Esophagus squamous epithelium (tissue), 5 donors: ENCODE measurements at regions of chr7 and their contacts with region 1.

Region 1: DNA sequence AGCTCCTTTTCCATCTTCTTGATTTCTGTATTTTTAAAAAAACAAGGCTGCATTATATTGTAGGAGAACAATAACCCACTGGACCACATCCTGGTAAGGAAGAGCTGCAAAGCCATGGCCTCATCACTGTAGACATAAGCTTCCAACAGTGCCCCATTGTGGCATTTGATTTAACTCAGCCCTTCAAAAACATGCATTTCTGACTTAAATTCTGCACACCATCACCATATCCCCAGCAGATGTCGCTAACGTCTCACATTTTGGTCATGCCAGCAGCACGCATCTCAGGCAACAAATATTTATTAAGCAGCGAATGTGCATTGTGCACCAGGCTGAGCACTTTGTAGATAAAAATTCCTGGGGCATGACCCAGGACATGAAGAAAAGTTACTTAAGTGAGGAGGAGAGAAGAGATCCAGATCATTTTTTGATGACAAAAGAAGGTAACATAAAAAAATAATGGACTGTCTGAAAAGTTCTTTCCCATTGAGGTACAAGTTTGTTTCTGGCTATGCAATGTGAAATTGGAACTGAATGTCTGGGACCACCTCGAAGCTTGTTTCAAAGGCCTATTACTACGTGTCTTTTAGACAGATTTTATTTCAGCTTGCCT is 164.6 kb upstream of the CDCA7L start:
- DNase-seq: no peak
- H3K4me3 ChIP-seq: no peak overlapping the region
- H3K27ac ChIP-seq: no peak overlapping the region
- H3K4me1 ChIP-seq: no peaks in the 10 kb centered on the region
- H3K27me3 ChIP-seq: no peaks in the 10 kb centered on the region
- CTCF ChIP-seq: peak; percentile 62 to 89 (median 83)
- POLR2A ChIP-seq: no peak

Region 2: DNA sequence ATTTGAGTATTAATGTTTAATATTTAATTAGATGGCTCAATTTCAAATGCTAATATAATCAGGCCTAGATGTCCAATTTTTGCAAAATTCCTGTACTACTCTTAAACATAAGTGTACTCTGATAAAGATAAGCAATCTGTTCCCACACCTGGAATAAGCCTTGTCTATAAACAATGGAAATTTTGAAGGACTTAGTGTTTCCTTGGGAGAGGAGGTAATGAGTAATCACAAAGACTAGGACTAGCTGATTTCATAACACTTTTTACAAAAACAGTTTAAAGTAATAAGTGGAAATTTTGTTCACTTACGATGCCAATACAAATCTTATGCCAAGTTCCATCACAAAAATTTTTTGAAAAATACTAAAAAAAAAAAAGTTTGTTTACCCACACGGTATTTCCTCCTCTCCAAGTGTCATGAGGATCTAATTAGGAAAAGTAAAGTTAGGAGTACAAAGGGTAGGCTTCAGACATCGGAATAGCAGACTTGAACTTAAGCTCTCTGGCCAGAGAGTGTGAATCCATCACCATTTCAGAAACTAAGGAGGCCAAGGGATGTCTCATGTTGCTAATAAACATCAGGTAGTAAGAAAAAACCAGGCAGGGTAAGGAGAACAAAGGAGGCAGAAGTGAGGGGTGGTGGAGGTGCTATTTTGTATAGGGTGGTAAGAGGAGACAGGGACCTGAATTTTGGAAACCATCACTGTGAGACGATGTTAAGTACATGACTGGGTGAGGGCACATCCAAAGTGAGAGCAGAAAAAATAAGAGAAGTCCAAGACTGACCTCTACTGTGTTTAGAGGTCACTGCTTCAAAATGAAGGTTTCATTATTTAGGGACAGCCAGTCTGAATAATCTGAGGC is 185.3 kb after region 1 on chr7:
- intact Hi-C with region 1: no loop called
- DNase-seq: no peak
- H3K4me3 ChIP-seq: no peak overlapping the region
- H3K27ac ChIP-seq: peak overlapping the region in 1 of 4 donors; percentile 46
- H3K4me1 ChIP-seq: peaks cover 0 to 9% (median 0%) of the 10 kb centered on the region in 3 donors
- H3K27me3 ChIP-seq: no peaks in the 10 kb centered on the region
- CTCF ChIP-seq: no peak
- POLR2A ChIP-seq: no peak

Region 3: GRCh38 chr7:22488643-22489462 is 378.5 kb after region 1 on chr7:
- intact Hi-C with region 1: loop called (anchors 5 kb)
- DNase-seq: no peak
- H3K4me3 ChIP-seq: no peak overlapping the region
- H3K27ac ChIP-seq: no peak overlapping the region
- H3K4me1 ChIP-seq: no peaks in the 10 kb centered on the region
- H3K27me3 ChIP-seq: no peaks in the 10 kb centered on the region
- CTCF ChIP-seq: peak; percentile 75 to 92 (median 90)
- POLR2A ChIP-seq: no peak